Aorta (tissue), 5 donors: ENCODE measurements at regions of chr5 and their contacts with region 1.

Region 1: GRCh38 chr5:180860887-180861822 is at the start of gene ZFP62:
- DNase-seq: peak; percentile 96 to 97
- ATAC-seq: peak; percentile 99
- H3K4me3 ChIP-seq: peak within 1 kb of the TSS; percentile 73 to 93
- H3K27ac ChIP-seq: peak within 1 kb of the TSS in 1 of 2 donors; percentile 58
- H3K4me1 ChIP-seq: no peaks in the 10 kb centered on the region
- H3K27me3 ChIP-seq: no peaks in the 10 kb centered on the region
- total RNA-seq, gene ZFP62: 20.2 to 24.7 TPM

Region 2: GRCh38 chr5:180784497-180785097 is 76.6 kb before region 1 on chr5:
- intact Hi-C with region 1: loop called in 1 of 2 experiments (anchors 5 kb)
- DNase-seq: peak; percentile 88 to 91
- ATAC-seq: peak; percentile 84
- H3K4me3 ChIP-seq: no peak overlapping the region
- H3K27ac ChIP-seq: no peak overlapping the region
- H3K4me1 ChIP-seq: peaks cover 0 to 5% of the 10 kb centered on the region in 2 donors
- H3K27me3 ChIP-seq: no peaks in the 10 kb centered on the region

Region 3: GRCh38 chr5:180802325-180803180 is 58.6 kb before region 1 on chr5 and contains the start of gene MGAT1:
- intact Hi-C with region 1: loop called in 1 of 2 experiments (anchors 5 kb)
- DNase-seq: peak; percentile 95 to 96
- ATAC-seq: peak; percentile 92
- H3K4me3 ChIP-seq: peak within 1 kb of the TSS; percentile 82 to 95
- H3K27ac ChIP-seq: peak within 1 kb of the TSS; percentile 92 to 95
- H3K4me1 ChIP-seq: peaks cover 2 to 7% of the 10 kb centered on the region in 2 donors
- H3K27me3 ChIP-seq: no peaks in the 10 kb centered on the region
- total RNA-seq, gene MGAT1: 143 to 180 TPM

Region 4: DNA sequence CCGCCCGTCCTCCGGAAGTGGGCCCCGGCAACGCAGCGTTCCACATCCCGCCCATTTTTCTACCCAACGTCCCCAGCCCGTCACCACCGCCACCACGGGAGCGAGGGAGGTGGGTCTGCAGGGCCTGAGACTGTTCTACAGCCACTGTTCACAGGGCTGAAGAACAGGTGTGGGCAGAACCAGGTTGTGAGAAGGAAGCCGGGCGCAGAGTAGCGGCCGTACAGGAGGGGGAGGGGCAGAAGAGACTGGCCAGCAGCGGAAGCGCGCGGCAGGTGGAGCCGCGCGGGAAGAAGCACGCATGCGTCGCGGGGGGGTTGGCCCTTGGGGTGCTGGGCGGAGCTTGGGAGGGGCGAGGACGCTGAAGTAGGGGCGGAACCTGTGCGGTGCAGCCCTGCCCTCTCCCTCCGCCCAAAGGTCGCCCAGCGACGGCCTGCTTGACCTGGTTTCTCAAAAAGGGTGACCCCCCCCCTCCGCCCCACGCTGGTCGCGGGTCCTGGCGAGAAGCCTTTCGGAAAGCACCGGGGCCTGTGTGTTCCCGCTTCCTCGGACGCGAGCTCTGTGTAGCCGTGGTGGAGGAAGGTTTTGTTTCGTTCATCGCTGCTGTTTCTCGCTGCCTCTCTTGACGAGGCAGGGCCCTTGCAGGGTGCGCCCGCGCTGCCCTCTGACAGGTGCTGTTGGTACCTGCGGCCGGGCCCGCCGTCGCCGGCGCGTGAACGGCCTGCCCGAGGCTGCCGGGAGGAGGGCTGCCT is 50.8 kb before region 1 on chr5:
- intact Hi-C with region 1: loop called in 1 of 2 experiments (anchors 2 kb)
- DNase-seq: peak; percentile 98 to 99
- ATAC-seq: peak; percentile 98
- H3K4me3 ChIP-seq: peak overlapping the region; percentile 68 to 71
- H3K27ac ChIP-seq: peak overlapping the region; percentile 83 to 92
- H3K4me1 ChIP-seq: peaks cover 5 to 15% of the 10 kb centered on the region in 2 donors
- H3K27me3 ChIP-seq: no peaks in the 10 kb centered on the region

Region 5: GRCh38 chr5:180831139-180832048 is 29.8 kb before region 1 on chr5:
- intact Hi-C with region 1: loop called in 1 of 2 experiments (anchors 2 kb)
- DNase-seq: peak; percentile 93 to 95
- ATAC-seq: peak; percentile 97
- H3K4me3 ChIP-seq: peak overlapping the region; percentile 51 to 90
- H3K27ac ChIP-seq: peak overlapping the region; percentile 49 to 85
- H3K4me1 ChIP-seq: no peaks in the 10 kb centered on the region
- H3K27me3 ChIP-seq: no peaks in the 10 kb centered on the region